Transverse colon (tissue), 4 donors: ENCODE measurements at regions of chr2 and their contacts with region 1.

Region 1: DNA sequence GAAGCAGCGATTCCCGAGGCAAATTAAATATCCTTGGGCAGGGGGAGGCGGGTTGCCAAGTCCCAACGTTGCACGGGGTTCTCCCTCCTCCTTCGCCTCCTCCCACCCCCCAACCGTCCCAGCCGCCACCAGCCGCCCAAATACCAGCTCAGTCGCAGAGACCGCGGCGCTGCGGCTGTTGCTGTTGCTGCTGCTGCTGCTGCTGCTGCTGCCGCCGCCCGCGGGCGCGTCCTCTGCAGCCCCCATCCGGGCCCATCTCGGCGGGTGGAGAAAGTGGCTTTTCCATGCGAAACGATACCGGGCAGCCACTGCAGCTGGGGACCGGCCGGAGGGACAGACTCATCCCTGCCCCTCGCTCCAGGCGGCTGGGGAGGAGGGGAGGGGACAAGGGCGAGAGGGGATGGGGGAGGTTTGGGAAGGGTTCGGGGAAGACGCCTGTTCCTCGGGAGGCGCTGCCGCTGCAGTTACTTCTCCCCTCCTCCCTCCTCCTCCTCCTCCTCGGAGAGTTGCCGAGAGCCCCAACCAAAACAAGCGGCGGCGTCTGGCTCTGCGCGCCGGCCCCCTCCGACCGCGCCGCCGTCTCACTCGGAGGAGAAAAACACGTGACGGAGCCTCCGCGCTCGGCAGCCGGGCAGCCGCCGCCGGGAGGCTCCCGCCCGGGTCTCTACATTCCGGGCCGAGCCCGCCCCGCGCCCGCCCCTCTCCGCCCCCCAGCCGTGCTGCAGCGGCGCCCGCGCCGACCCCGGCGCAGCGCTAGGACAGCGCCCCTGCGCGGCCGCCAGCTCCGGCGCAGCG is at the start of gene IRS1:
- DNase-seq: peak; percentile 73
- H3K4me3 ChIP-seq: peak within 1 kb of the TSS; percentile 46 to 91 (median 72)
- H3K27ac ChIP-seq: peak within 1 kb of the TSS; percentile 93 to 96 (median 94)
- H3K4me1 ChIP-seq: peaks cover 0 to 36% (median 25%) of the 10 kb centered on the region in 4 donors
- H3K27me3 ChIP-seq: no peaks in the 10 kb centered on the region
- CTCF ChIP-seq: peak in 1 of 5 experiments; percentile 38
- EP300 ChIP-seq: no peak
- POLR2A ChIP-seq: peak; percentile 20
- total RNA-seq, gene IRS1: 6.2 to 20.9 (median 12.8) TPM

Region 2: GRCh38 chr2:225660262-225661131 is 1138.9 kb before region 1 on chr2:
- in situ Hi-C with region 1: loop called in 2 of 4 experiments (anchors 10 to 25 kb)
- intact Hi-C with region 1: loop called (anchors 10 kb)
- DNase-seq: peak; percentile 76
- H3K4me3 ChIP-seq: no peak overlapping the region
- H3K27ac ChIP-seq: no peak overlapping the region
- H3K4me1 ChIP-seq: no peaks in the 10 kb centered on the region
- H3K27me3 ChIP-seq: no peaks in the 10 kb centered on the region
- CTCF ChIP-seq: peak; percentile 72 to 86 (median 78)
- EP300 ChIP-seq: no peak
- POLR2A ChIP-seq: no peak

Region 3: DNA sequence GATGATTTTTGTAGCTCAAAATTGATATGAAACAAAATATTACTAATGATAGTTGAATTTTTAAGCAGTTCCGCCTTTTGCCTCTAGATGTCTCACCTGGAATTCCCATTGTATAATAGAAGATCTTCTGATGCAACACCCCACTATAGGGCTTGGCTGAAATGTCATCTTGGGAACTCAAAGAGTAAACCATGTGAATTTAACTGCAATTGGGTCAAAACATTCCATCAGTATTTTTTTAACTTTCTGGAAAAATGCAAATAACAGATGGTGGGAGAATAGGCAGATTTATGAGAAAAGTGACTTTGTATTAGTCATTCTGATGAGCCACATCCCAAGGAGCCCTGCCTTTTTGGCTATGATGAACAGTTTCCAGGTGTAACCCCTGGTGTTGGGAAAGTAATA is 909.9 kb before region 1 on chr2:
- in situ Hi-C with region 1: loop called (anchors 10 kb)
- intact Hi-C with region 1: loop called (anchors 5 kb)
- DNase-seq: no peak
- H3K4me3 ChIP-seq: no peak overlapping the region
- H3K27ac ChIP-seq: no peak overlapping the region
- H3K4me1 ChIP-seq: no peaks in the 10 kb centered on the region
- H3K27me3 ChIP-seq: no peaks in the 10 kb centered on the region
- CTCF ChIP-seq: peak; percentile 64 to 79 (median 73)
- EP300 ChIP-seq: no peak
- POLR2A ChIP-seq: no peak

Region 4: DNA sequence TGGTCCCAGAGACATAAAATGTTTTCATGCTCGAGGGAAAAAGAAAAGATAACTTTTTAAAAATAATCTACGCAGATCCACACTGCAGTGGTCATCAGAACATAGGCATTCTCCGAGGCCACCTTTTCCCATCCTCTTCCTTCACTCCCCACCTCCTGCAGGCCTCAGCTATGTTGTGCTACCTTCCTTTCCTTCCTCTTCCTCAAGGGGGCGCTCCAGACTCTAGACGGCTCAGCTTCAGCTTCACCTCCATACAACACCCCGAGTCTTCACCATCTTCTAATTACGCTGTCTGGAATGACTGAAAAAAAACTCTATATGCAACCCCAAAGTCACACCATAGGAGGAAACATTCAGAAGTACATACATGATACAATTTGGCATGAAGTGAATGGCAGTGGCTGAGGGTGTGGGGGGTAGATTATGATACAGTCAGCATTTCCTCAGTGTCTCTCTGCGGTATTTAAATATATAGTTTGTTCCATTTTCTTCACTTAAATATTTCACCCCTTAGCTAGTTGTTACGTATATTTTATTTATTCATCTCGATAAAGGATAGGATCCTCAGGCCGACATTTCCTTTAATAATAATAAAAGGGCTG is 583.4 kb before region 1 on chr2:
- in situ Hi-C with region 1: loop called (anchors 10 to 25 kb)
- intact Hi-C with region 1: loop called (anchors 10 kb)
- DNase-seq: peak; percentile 75
- H3K4me3 ChIP-seq: no peak overlapping the region
- H3K27ac ChIP-seq: no peak overlapping the region
- H3K4me1 ChIP-seq: peaks cover 0 to 8% (median 3%) of the 10 kb centered on the region in 4 donors
- H3K27me3 ChIP-seq: no peaks in the 10 kb centered on the region
- CTCF ChIP-seq: peak; percentile 63 to 69 (median 66)
- EP300 ChIP-seq: no peak
- POLR2A ChIP-seq: no peak

Region 5: GRCh38 chr2:226984750-226985582 is 185.6 kb after region 1 on chr2:
- in situ Hi-C with region 1: loop called in 3 of 4 experiments (anchors 10 to 25 kb)
- intact Hi-C with region 1: no loop called
- DNase-seq: peak; percentile 15
- H3K4me3 ChIP-seq: no peak overlapping the region
- H3K27ac ChIP-seq: peak overlapping the region in 3 of 4 donors; percentile 4 to 34 (median 31)
- H3K4me1 ChIP-seq: peaks cover 0 to 7% (median 2%) of the 10 kb centered on the region in 4 donors
- H3K27me3 ChIP-seq: no peaks in the 10 kb centered on the region
- CTCF ChIP-seq: peak; percentile 64 to 70 (median 68)
- EP300 ChIP-seq: no peak
- POLR2A ChIP-seq: no peak